ENCODE measurements at regions of chr22 and their contacts with region 1.

Region 1: DNA sequence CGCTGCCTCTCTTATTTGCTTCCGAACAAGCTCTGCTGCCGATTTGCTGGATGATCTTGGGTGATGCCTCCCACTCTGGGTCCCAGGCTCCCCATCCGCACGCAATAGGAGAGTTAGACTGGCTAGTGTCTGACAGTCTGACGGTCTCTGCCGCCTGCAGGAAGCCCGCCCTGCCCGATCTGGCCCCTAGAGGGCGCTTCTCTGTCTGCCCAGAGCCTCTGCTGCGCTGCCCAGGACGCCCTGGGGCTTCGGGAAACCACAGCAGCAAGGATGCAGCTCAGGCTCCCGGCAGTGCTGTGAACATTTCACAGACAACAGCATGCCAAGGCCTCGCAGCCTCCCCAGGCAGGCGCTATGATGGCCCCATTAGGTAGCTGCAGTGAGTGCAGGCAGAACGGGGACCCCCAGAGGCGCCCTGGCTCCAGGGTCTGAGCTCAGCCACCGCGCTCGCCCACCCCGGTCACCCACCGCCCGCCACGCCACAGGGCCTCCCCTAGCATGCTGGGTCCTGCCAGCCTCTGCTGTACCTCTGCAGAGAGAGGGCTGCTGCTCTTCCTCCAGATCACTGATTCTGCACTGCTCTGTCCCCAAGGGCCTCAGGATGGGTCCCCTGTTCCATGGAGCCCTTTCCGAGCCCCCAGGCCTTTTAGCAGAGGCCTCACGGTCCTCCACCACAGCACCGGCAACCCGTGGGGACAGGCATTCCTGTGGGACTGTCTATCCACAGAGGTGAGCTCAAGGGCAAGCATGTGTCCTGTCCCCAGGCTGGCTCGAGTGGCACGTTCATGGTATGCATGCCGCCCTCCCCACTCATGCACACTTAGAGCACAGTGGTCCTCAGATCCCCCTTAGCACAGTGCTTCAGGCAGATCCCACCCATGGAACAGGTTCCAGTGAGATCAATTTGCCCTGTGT is 4.3 kb upstream of the BAIAP2L2 start:
- DNase-seq: peak; percentile 15
- H3K4me3 ChIP-seq: no peak overlapping the region
- H3K27me3 ChIP-seq: no peaks in the 10 kb centered on the region
- CTCF ChIP-seq: peak; percentile 99

Region 2: GRCh38 chr22:38097557-38098409 is 17.0 kb before region 1 on chr22:
- CTCF ChIA-PET with region 1: interaction called, 18 read pairs
- POLR2A ChIA-PET with region 1: no interaction called
- DNase-seq: no peak
- H3K4me3 ChIP-seq: no peak overlapping the region
- H3K27me3 ChIP-seq: no peaks in the 10 kb centered on the region
- CTCF ChIP-seq: peak; percentile 43

Region 3: GRCh38 chr22:38132136-38132535 is 17.4 kb after region 1 on chr22:
- CTCF ChIA-PET with region 1: interaction called, 12 read pairs
- POLR2A ChIA-PET with region 1: no interaction called
- DNase-seq: no peak
- H3K4me3 ChIP-seq: no peak overlapping the region
- H3K27me3 ChIP-seq: no peaks in the 10 kb centered on the region
- CTCF ChIP-seq: no peak

Region 4: GRCh38 chr22:38141217-38141973 is 26.7 kb after region 1 on chr22:
- CTCF ChIA-PET with region 1: interaction called, 13 read pairs
- POLR2A ChIA-PET with region 1: no interaction called
- DNase-seq: no peak
- H3K4me3 ChIP-seq: no peak overlapping the region
- H3K27me3 ChIP-seq: no peaks in the 10 kb centered on the region
- CTCF ChIP-seq: no peak

Region 5: DNA sequence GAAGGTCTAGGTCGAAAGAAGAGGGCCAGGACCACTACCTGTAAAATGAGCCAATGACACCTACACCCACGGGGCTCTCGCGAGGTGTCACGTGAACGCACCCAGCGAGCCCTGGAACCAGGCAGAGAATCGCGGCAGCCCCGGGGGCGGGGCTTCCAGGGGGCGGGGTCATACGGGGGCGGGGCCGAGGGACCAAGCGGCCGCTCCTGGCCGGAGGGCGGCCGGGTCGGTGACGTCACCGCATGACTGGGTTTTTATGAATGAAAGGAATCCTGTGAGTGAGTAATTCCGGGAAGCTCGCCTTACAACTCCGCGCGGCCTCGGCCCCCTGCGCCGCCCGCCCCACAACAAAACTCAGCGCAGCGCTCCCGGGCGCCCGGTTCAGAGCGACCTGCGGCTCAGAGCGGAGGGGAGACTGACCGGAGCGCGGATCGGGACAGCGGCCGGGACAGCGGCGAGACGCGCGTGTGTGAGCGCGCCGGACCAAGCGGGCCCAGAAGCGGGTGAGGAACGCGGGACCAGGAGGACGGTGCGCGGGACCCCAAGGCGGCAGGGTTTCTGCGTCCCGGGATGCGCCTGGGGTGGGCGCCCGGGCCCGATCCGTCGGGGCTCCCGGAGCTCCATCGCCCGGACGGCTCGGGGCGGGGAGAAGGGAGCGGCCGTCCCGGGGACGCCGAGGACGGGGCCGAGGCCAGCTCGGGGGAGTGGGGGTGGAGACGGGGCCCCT is 87.1 kb after region 1 on chr22 and contains the start of gene MAFF:
- CTCF ChIA-PET with region 1: interaction called, 13 read pairs
- POLR2A ChIA-PET with region 1: interaction called, 7 read pairs
- DNase-seq: peak; percentile 83
- H3K4me3 ChIP-seq: peak within 1 kb of the TSS; percentile 97
- H3K27me3 ChIP-seq: no peaks in the 10 kb centered on the region
- CTCF ChIP-seq: no peak
- polyA plus RNA-seq, gene MAFF: 14.1 and 14.8 TPM in 2 replicates

Region 6: GRCh38 chr22:38214256-38215056 is 99.7 kb after region 1 on chr22:
- CTCF ChIA-PET with region 1: interaction called, 11 read pairs
- POLR2A ChIA-PET with region 1: no interaction called
- DNase-seq: no peak
- H3K4me3 ChIP-seq: no peak overlapping the region
- H3K27me3 ChIP-seq: no peaks in the 10 kb centered on the region
- CTCF ChIP-seq: no peak

Region 7: DNA sequence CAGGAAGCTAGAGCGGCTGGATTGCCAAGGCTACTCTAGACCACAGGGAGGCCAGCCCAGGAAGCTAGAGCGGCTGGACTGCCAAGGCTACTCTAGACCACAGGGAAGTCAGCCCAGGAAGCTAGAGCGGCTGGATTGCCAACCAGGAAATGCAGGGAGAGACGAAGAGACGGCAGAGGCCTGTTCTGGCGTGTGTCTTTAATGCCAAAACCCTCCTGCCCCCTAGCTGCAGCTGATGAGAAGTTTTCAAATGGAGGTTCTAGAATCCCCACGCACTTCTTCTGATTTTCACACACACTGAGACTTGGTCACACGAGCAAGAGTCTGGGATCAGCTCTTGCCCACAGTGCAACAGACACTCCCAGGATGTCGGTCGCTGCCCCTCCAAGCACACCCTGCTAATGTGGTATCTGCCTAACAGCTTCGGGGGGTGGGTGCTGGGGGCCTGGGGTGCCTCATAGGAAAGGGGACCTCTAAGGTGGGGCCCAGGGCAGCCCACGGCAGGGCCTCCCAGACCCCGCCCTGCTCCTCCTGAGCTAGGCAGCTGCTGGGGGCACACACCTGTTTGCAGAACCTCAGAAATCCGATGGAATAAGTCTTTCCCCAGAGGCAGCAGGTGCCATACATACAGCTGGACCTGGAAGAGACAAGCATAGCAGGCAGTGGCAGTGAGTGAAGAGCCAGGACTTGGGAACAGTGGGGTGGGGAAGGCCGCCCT is 115.5 kb after region 1 on chr22:
- CTCF ChIA-PET with region 1: interaction called, 18 read pairs
- POLR2A ChIA-PET with region 1: no interaction called
- DNase-seq: no peak
- H3K4me3 ChIP-seq: no peak overlapping the region
- H3K27me3 ChIP-seq: no peaks in the 10 kb centered on the region
- CTCF ChIP-seq: peak; percentile 32